AG04449 (cell line): ENCODE measurements at regions of chr16 and their contacts with region 1.

Region 1: DNA sequence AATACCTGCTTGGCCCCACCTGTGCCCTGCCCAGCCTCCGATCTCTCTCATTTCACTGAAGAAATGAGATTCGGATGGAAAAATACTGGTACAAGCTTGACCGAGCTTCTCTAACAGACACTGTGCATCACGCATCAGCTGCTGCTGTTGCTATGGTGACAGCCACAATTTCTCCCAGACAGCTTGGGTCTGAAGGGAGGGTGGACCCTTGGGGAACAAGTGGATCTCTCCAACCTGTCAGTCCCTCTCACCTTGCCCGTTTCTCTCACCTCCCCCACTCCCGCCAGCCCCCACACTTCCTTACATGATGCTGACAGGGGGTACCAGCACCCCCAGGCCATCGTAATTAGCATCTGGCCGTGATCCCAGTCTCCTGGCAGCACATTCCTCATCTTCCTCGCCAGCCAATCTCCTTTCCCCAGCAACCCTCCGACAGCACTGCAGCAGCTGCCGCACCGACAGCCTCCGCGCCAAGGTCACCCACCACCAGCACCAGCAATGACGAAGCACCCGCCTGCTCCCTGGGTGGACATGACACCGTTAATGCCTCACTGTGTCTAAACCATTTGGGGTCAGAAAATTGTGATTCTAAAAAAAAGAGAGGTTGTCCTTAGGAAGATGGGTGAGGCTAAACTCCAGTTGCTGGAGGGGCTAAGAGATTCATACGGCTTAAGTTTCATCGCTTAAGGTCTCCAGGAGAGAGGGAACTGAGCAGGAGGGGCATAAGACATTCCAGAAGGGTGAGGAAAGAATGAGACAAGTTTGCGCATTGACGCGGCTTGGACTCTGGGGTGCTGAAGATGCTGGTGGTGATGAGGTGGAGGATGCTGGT is 58.6 kb upstream of the TNRC6A start:
- DNase-seq: no peak
- H3K4me3 ChIP-seq: peak overlapping the region; percentile 35
- CTCF ChIP-seq: no peak

Region 2: GRCh38 chr16:24645739-24646645 is 24.8 kb before region 1 on chr16:
- CTCF ChIA-PET with region 1: no interaction called
- POLR2A ChIA-PET with region 1: interaction called, 11 read pairs
- DNase-seq: peak; percentile 98
- H3K4me3 ChIP-seq: no peak overlapping the region
- CTCF ChIP-seq: no peak